Endothelial cell of umbilical vein (primary cell): ENCODE measurements at regions of chr7 and their contacts with region 1.

Region 1: GRCh38 chr7:107251963-107252362 is 83.2 kb downstream of the HBP1 start:
- DNase-seq: no peak
- H3K4me3 ChIP-seq: no peak overlapping the region
- H3K27ac ChIP-seq: no peak overlapping the region
- H3K4me1 ChIP-seq: no peaks in the 10 kb centered on the region
- H3K27me3 ChIP-seq: no peaks in the 10 kb centered on the region
- CTCF ChIP-seq: no peak
- POLR2A ChIP-seq: no peak

Region 2: DNA sequence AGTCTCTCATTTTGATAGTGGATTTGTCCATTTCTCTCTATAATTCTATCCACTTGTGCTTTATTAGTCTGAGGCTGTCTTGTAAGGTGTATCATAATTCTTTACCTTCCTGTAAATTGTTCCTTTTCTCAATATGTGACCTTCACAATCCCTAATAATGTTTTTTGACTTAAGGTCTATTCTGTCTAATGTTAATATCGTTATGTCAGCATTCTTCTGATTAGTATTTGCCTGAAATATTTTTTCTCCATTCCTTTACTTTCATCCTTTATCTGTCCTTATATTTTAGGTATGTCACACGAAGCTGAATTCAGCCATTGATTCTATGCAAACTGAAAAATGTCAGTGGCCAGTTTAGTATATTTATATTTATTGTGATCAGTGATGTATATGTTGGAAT is 16.6 kb after region 1 on chr7:
- CTCF ChIA-PET with region 1: interaction called, 3 read pairs
- POLR2A ChIA-PET with region 1: no interaction called
- dilution Hi-C with region 1: no loop called
- intact Hi-C with region 1: loop called (anchors 1 kb)
- DNase-seq: no peak
- H3K4me3 ChIP-seq: no peak overlapping the region
- H3K27ac ChIP-seq: no peak overlapping the region
- H3K4me1 ChIP-seq: no peaks in the 10 kb centered on the region
- H3K27me3 ChIP-seq: no peaks in the 10 kb centered on the region
- CTCF ChIP-seq: no peak
- POLR2A ChIP-seq: no peak